Activated naive CD8-positive, alpha-beta T cell treated with anti-CD3 and anti-CD28 coated beads, Interleukin-2, amount 10 ng/mL, durations not matched to agents 7 days and 5 days (primary cell): ENCODE measurements at regions of chr21 and their contacts with region 1.

Region 1: GRCh38 chr21:41283211-41283818 is 33.3 kb upstream of the FAM3B start:
- DNase-seq: no peak
- ATAC-seq: peak; percentile 93
- H3K4me3 Mint-ChIP-seq: no peak overlapping the region
- H3K27ac Mint-ChIP-seq: no peak overlapping the region
- H3K4me1 Mint-ChIP-seq: peaks cover 3% of the 10 kb centered on the region
- H3K27me3 Mint-ChIP-seq: peaks cover 36% of the 10 kb centered on the region

Region 2: GRCh38 chr21:41102281-41102680 is 181.0 kb before region 1 on chr21:
- POLR2A ChIA-PET with region 1: interaction called, 10 read pairs
- DNase-seq: no peak
- ATAC-seq: no peak
- H3K4me3 Mint-ChIP-seq: no peak overlapping the region
- H3K27ac Mint-ChIP-seq: no peak overlapping the region
- H3K4me1 Mint-ChIP-seq: no peaks in the 10 kb centered on the region
- H3K27me3 Mint-ChIP-seq: peaks cover 20% of the 10 kb centered on the region

Region 3: DNA sequence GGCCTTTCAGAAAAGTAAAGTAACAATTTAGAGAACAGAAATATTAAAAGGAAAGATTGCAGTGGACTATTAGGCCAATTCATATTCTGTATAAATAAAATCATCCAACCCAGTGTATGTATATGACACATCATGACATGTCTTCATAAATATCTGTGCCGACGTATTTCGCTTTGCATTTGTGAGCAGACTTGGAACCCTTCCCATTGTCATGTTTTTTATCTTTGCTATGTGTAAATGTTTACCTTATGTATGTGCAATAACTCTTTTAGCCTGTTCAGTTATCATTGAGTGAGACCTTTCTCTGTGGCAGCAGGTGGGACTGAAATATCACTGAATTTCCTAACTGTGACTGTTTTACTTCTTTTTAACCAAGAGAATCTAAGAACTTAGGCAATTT is 24.7 kb before region 1 on chr21:
- POLR2A ChIA-PET with region 1: no interaction called
- DNase-seq: no peak
- ATAC-seq: no peak
- H3K4me3 Mint-ChIP-seq: no peak overlapping the region
- H3K27ac Mint-ChIP-seq: no peak overlapping the region
- H3K4me1 Mint-ChIP-seq: no peaks in the 10 kb centered on the region
- H3K27me3 Mint-ChIP-seq: peaks cover 11% of the 10 kb centered on the region

Region 4: DNA sequence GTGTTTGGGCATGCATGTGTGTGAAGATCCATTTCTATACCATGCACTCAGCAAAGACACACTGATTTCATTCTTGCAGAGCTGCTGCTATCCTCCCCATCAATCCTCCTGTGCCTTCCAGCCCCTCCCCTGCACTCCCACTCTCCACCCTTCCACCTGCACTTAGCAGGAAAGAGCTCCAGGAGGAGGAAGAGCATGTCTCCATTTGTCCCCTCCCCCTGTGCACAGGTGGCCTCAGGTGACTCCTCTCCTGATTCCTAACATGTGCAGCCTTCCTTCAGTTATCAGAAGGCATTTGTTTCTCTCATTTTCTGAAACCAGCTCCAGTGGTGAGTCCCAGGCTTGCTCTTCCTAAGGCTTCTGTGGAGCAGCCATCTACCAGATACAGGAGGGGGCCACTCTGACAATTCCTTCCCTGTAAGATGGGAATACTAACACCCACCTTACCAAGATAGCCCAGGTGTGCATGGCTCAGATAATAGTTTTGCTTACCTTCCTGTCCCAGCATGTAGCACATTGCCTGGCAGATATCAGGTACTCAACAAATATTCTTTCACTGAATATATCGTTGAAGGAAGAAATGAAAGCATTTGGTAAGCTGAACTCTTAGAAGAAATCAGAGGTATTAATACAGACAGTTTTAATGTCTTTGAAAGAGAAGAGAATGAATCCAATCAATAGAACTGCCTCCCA is 11.4 kb after region 1 on chr21:
- POLR2A ChIA-PET with region 1: no interaction called
- DNase-seq: no peak
- ATAC-seq: no peak
- H3K4me3 Mint-ChIP-seq: no peak overlapping the region
- H3K27ac Mint-ChIP-seq: no peak overlapping the region
- H3K4me1 Mint-ChIP-seq: peaks cover 10% of the 10 kb centered on the region
- H3K27me3 Mint-ChIP-seq: peaks cover 32% of the 10 kb centered on the region

Region 5: GRCh38 chr21:41338455-41338854 is 55.1 kb after region 1 on chr21:
- POLR2A ChIA-PET with region 1: no interaction called
- DNase-seq: no peak
- ATAC-seq: no peak
- H3K4me3 Mint-ChIP-seq: no peak overlapping the region
- H3K27ac Mint-ChIP-seq: no peak overlapping the region
- H3K4me1 Mint-ChIP-seq: no peaks in the 10 kb centered on the region
- H3K27me3 Mint-ChIP-seq: peaks cover 24% of the 10 kb centered on the region

Region 6: DNA sequence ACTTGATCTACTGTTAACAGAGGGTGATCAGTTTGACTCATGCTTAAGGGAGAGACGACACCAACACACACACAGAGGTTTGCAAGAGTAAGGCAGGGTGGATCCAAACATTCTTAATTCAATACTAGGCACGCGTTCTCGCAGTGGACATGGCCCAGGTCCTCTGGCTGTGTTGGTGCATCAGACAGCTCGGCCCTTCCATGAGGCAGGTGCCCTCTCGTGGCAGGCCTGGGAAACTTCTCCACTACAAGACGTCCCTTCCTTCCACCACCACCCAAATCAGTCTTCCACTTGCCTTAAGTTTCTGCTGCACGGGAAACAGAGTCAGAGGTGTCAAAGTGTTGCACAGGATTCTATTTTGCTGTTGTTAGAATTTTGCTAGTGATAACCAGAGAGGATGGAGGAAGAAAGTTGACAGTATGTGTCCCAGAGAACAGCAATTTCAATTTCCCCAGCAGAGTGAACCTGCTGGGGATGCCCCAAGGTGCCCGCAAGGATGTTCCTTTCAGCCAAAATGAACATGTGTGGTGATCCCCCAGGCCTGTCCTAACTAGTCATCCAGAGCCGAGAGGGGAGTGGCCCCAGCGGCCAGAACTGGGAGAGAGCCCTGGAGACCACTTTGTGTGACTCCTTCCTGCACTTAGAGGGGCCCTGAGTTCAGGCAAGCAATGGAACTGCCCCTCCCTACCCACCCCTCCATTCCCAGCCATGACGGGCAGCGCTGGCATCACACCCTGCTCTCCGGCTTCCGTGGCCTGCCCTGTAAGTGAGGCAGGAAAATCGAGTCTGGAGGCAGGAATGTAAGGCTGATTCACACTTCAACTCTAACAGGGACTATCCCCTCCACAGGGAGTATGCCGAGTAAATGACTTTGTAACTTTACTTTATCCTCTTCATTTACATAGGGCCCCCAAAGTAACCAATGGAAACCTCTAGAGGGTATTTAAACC is 177.5 kb after region 1 on chr21:
- POLR2A ChIA-PET with region 1: interaction called, 11 read pairs
- DNase-seq: peak; percentile 63
- ATAC-seq: peak; percentile 63
- H3K4me3 Mint-ChIP-seq: no peak overlapping the region
- H3K27ac Mint-ChIP-seq: peak overlapping the region; percentile 72
- H3K4me1 Mint-ChIP-seq: peaks cover 16% of the 10 kb centered on the region
- H3K27me3 Mint-ChIP-seq: no peaks in the 10 kb centered on the region